CD4-positive, alpha-beta T cell (primary cell): ENCODE measurements at regions of chr10 and their contacts with region 1.

Region 1: GRCh38 chr10:21533467-21534279 is at the start of gene MLLT10:
- DNase-seq: peak; percentile 81 to 98 (median 92)
- ATAC-seq: peak; percentile 83
- H3K4me3 ChIP-seq: peak within 1 kb of the TSS; percentile 85
- H3K4me3 Mint-ChIP-seq: peak within 1 kb of the TSS; percentile 96
- H3K27ac ChIP-seq: peak within 1 kb of the TSS; percentile 81 to 83
- H3K27ac Mint-ChIP-seq: peak within 1 kb of the TSS; percentile 90
- H3K4me1 ChIP-seq: peaks cover 19% of the 10 kb centered on the region
- H3K4me1 Mint-ChIP-seq: peaks cover 29% of the 10 kb centered on the region
- H3K27me3 ChIP-seq: no peaks in the 10 kb centered on the region
- H3K27me3 Mint-ChIP-seq: no peaks in the 10 kb centered on the region
- CTCF ChIP-seq: peak; percentile 30
- total RNA-seq, gene MLLT10: 46.0 to 64.1 TPM

Region 2: GRCh38 chr10:21516242-21517131 is 17.2 kb before region 1 on chr10:
- CTCF ChIA-PET with region 1: interaction called, 3 read pairs
- POLR2A ChIA-PET with region 1: interaction called, 19 read pairs
- intact Hi-C with region 1: no loop called
- DNase-seq: peak in 9 of 14 experiments; percentile 31 to 83 (median 54)
- ATAC-seq: peak; percentile 66
- H3K4me3 ChIP-seq: peak overlapping the region; percentile 39
- H3K4me3 Mint-ChIP-seq: peak overlapping the region; percentile 77
- H3K27ac ChIP-seq: no peak overlapping the region
- H3K27ac Mint-ChIP-seq: no peak overlapping the region
- H3K4me1 ChIP-seq: peaks cover 39% of the 10 kb centered on the region
- H3K4me1 Mint-ChIP-seq: peaks cover 44% of the 10 kb centered on the region
- H3K27me3 ChIP-seq: peaks cover 58 to 84% of the 10 kb centered on the region in 2 experiments
- H3K27me3 Mint-ChIP-seq: peaks cover 92% of the 10 kb centered on the region
- CTCF ChIP-seq: no peak

Region 3: DNA sequence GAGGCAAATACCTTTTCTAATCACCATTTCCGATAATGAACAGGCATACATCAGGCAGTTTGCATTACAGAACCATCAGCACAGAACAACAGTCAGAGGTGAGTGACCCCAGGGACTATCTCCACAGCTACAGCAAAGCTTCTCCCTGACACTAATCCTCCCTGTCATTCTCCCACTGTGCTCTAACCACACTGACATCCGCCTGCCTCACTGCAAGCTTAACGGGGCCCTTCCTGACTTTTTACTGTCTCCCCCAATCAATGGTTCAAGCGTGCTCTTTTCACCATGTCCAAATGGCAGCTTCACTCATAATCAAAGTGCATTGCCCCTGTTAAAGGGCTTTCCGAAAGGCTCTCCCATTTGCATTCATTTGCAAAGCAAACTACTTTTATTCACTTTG is 273.5 kb after region 1 on chr10:
- CTCF ChIA-PET with region 1: no interaction called
- POLR2A ChIA-PET with region 1: no interaction called
- intact Hi-C with region 1: no loop called
- DNase-seq: no peak
- ATAC-seq: no peak
- H3K4me3 ChIP-seq: no peak overlapping the region
- H3K4me3 Mint-ChIP-seq: no peak overlapping the region
- H3K27ac ChIP-seq: no peak overlapping the region
- H3K27ac Mint-ChIP-seq: no peak overlapping the region
- H3K4me1 ChIP-seq: no peaks in the 10 kb centered on the region
- H3K4me1 Mint-ChIP-seq: no peaks in the 10 kb centered on the region
- H3K27me3 ChIP-seq: no peaks in the 10 kb centered on the region
- H3K27me3 Mint-ChIP-seq: no peaks in the 10 kb centered on the region
- CTCF ChIP-seq: no peak

Region 4: GRCh38 chr10:22244001-22244400 is 710.3 kb after region 1 on chr10:
- CTCF ChIA-PET with region 1: no interaction called
- POLR2A ChIA-PET with region 1: no interaction called
- intact Hi-C with region 1: loop called in 1 of 2 experiments (anchors 5 kb)
- DNase-seq: peak in 4 of 14 experiments; percentile 10 to 38 (median 18)
- ATAC-seq: no peak
- H3K4me3 ChIP-seq: no peak overlapping the region
- H3K4me3 Mint-ChIP-seq: no peak overlapping the region
- H3K27ac ChIP-seq: no peak overlapping the region
- H3K27ac Mint-ChIP-seq: no peak overlapping the region
- H3K4me1 ChIP-seq: no peaks in the 10 kb centered on the region
- H3K4me1 Mint-ChIP-seq: peaks cover 19% of the 10 kb centered on the region
- H3K27me3 ChIP-seq: peaks cover 7% of the 10 kb centered on the region in 2 experiments
- H3K27me3 Mint-ChIP-seq: peaks cover 6% of the 10 kb centered on the region
- CTCF ChIP-seq: no peak